Dorsolateral prefrontal cortex (tissue), 120 donors: ENCODE measurements at regions of chr7 and their contacts with region 1.

Region 1: DNA sequence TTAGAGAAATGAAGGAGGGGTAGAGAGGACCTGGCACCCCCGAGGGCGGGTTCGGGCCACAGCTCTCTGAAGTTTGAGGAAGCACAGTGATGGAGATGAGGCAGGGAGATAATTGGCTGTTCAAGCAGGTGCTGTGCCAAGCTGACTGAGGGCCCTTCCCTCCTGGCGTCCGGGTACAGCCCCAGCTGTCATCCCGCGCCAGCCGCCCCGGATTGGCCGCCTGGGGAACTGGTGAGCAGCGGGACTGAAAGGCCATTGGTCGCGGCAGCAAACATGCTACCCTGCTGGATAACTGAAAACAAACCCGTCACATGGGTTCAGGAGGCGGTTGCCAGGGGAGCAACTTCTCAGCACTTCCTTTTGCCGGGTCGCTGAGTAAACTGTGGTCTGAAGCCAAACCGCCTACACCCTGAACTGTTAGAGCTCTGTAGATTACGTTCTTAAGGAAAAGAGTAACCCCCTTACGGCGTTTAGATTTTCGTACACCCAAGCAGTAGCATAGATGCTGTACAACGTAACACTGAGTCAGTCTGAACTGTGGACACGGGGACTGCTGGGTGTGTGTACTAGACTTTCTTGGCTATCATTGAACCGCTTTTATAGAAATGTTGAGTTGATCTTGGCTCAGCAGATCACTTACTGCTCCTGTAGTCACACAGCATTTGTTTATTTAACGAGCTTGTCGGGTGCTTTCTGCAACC is 1.3 kb downstream of the INSIG1 start:
- DNase-seq: peak; percentile 98 to 99 (median 99)
- H3K4me3 ChIP-seq: peak overlapping the region; percentile 74 to 100 (median 93)
- H3K27ac ChIP-seq: peak overlapping the region; percentile 89 to 100 (median 99)
- H3K27me3 ChIP-seq: no peaks in the 10 kb centered on the region
- CTCF ChIP-seq: peak in 27 of 56 donors; percentile 12 to 45 (median 25)

Region 2: DNA sequence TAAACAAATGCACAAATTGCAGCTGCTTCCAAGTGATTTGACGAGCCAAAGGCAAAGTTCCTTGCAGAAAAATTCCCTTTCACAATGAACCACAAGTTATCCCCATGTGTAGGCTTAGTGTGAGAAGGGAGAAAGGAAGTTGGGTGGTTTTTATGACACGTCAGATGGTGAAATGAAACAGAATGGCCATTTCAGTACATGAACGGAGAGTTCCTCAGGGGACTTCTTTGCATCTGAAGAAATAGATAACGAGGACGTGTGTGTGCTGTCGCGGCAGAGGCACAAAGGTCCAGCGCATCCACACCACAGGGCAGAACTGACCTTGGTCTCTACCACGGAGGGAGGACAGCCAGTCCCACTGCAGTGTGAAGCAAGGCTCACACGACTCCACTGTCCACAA is 431.9 kb before region 1 on chr7:
- intact Hi-C with region 1: no loop called
- DNase-seq: peak in 1 of 10 donors; percentile 7
- H3K4me3 ChIP-seq: no peak overlapping the region
- H3K27ac ChIP-seq: no peak overlapping the region
- H3K27me3 ChIP-seq: no peaks in the 10 kb centered on the region
- CTCF ChIP-seq: no peak

Region 3: DNA sequence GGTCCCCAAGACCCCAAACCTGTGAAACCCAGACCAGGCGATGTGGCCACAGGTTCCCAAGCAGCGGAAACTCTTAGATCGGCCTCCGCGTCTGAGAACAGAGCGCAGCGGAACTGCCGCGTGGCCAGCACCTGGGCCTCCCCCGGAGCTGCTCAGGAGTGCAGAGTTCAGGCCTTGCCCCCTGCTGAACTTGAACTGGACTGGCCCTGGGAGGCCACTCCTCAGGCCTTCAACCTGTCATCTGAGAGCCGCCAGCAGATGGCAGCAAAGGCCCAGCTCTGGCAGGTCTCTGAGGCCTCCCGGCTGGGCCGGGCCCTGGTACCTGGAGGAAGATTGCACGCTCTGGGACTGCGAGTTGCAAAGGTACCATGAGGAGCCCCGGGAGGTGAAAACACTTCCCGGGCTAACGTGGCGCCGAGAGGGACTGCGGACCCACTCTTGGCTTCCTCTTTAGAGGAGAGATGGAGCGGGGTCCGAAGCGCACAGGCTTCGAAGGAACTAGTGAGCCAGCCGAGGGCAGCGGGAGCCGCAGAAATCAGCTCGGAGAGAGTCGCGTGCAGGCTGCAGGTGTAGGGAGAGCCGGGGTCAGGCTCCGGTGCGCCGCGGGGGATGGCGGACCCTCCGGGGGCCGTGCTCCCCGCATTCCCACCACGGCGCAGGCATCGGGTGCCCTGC is 385.2 kb before region 1 on chr7:
- intact Hi-C with region 1: loop called in 1 of 2 experiments (anchors 5 kb)
- DNase-seq: peak; percentile 86 to 93 (median 90)
- H3K4me3 ChIP-seq: peak overlapping the region in 49 of 59 donors; percentile 7 to 62 (median 40)
- H3K27ac ChIP-seq: peak overlapping the region in 51 of 59 donors; percentile 6 to 86 (median 68)
- H3K27me3 ChIP-seq: peaks cover 0 to 7% (median 0%) of the 10 kb centered on the region in 45 donors
- CTCF ChIP-seq: peak; percentile 81 to 98 (median 94)

Region 4: GRCh38 chr7:155190688-155191087 is 108.3 kb before region 1 on chr7:
- intact Hi-C with region 1: loop called in 1 of 2 experiments (anchors 5 kb)
- DNase-seq: peak in 4 of 10 donors; percentile 54 to 73 (median 65)
- H3K4me3 ChIP-seq: peak overlapping the region in 36 of 59 donors; percentile 8 to 63 (median 41)
- H3K27ac ChIP-seq: no peak overlapping the region
- H3K27me3 ChIP-seq: peaks cover 0 to 10% (median 0%) of the 10 kb centered on the region in 45 donors
- CTCF ChIP-seq: peak; percentile 52 to 89 (median 82)

Region 5: DNA sequence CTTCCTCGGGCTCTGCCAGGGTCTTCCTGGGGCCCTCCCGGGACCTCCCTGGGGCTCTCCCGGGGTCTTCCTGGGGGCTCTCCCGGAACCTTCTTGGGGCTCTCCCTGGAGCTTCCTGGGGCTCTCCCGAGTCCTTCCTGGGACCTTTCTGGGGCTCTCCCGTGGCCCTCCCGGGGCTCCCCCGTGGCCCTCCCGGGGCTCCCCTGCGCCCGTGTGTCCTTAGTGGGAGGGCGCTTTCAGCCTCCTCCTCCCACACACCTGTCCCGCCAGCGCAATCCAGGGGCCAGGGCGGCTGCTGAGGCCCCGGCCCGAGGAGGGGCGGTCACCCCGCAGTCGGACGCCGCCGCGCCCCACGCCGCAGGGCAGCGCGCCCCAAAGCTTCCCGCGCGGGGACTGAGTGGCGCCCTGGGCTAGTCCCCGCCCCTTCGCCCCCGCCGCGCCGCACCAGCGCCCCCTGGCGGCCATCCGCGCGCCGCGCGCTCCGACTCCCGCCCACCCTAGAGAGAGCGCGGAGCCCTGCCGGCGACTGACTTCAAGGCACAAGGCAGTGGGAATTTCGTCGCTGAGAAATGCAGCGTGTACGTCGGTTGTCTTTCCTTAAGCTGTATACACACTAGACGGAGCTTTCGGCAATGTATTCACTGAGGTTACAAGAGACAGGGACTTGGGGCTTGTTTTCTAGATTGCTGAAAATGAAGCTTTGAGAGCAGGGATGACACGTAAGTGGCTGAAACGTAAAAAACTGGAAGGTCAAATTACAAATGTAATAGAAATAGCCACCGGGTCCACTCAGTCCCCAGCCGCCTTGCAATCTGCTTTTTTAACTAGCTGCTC is 45.8 kb after region 1 on chr7:
- intact Hi-C with region 1: loop called in 1 of 2 experiments (anchors 5 kb)
- DNase-seq: peak; percentile 60 to 90 (median 70)
- H3K4me3 ChIP-seq: peak overlapping the region in 57 of 59 donors; percentile 26 to 66 (median 49)
- H3K27ac ChIP-seq: no peak overlapping the region
- H3K27me3 ChIP-seq: peaks cover 0 to 18% (median 10%) of the 10 kb centered on the region in 45 donors
- CTCF ChIP-seq: peak; percentile 45 to 99 (median 85)

Region 6: DNA sequence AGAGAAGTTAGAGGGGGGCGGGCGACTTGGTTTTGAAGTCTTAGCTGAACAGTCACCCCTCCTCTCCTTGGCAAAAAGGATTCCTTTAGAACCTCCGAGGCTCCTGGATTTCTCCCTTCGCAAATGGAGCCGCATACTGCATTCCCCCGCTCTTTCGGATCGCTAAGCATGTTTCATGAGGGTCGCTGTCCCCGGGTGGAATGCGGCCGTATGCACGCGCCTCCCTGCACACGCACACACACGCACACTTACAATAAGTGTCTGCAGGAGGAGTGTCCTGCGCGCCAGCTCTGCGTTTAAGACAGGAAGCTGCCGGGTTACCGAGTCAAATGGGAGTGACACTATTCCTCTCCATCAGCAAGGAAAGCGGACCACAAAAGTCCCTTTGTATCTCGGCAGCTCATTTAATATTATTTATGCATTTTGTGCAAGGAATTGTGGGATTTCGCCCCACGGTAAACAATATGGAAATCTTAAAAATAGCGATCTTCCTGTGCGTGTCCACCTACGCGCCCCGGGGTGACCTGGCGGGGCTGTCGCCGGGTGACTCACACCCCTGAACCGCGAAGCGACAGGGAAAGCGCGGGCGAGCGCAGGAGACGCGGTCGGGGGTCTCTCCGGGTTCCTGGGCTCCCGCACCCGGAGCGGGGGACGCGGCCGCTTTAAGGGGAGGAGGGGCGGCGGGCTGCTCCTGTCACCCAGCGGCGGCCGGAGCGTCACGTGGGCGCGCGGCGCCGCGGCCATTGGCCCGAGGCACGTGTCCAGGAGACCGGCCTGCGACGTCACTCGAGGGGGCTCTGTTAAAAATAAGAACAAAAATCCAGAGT is 158.0 kb after region 1 on chr7:
- intact Hi-C with region 1: loop called in 1 of 2 experiments (anchors 5 kb)
- DNase-seq: peak; percentile 67 to 95 (median 78)
- H3K4me3 ChIP-seq: peak overlapping the region; percentile 23 to 76 (median 59)
- H3K27ac ChIP-seq: peak overlapping the region in 10 of 59 donors; percentile 10 to 97 (median 54)
- H3K27me3 ChIP-seq: peaks cover 21 to 96% (median 95%) of the 10 kb centered on the region in 45 donors
- CTCF ChIP-seq: no peak